WTC11 (cell line): ENCODE measurements at regions of chr1 and their contacts with region 1.

Region 1: GRCh38 chr1:8727809-8728213 is 89.6 kb downstream of the RERE start:
- DNase-seq: no peak
- ATAC-seq: no peak
- H3K4me3 Mint-ChIP-seq: no peak overlapping the region
- H3K27ac Mint-ChIP-seq: peak overlapping the region; percentile 63; the same call in 1 of the 2 replicates
- H3K4me1 Mint-ChIP-seq: peaks cover 39% of the 10 kb centered on the region
- H3K27me3 Mint-ChIP-seq: no peaks in the 10 kb centered on the region
- CTCF ChIP-seq: no peak

Region 2: DNA sequence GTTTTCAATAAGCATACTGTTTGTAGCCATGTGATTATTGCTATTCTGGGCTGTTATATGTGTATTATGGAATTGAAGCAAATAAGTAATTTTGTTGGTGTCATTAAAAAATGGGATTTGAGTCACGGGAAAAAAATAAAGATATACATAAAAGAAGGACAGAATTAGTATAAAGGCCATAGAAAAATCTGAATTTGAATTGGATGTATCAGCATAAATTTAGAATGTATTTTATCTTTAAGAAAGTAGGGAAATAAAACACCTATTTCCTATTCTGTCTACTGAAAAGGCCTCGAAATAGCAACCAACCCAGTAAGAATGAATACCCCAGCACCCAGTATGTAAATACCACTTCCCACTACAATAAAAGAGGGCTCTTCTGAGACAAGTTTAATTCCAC is 224.0 kb before region 1 on chr1:
- CTCF ChIA-PET with region 1: no interaction called
- POLR2A ChIA-PET with region 1: no interaction called
- DNase-seq: no peak
- ATAC-seq: no peak
- H3K4me3 Mint-ChIP-seq: no peak overlapping the region
- H3K27ac Mint-ChIP-seq: 0 out of 2 replicates have a peak overlapping the region, but pooled peaks have one; percentile 55
- H3K4me1 Mint-ChIP-seq: peaks cover 21% of the 10 kb centered on the region
- H3K27me3 Mint-ChIP-seq: peaks cover 3% of the 10 kb centered on the region; the same call in 1 of the 2 replicates
- CTCF ChIP-seq: no peak

Region 3: DNA sequence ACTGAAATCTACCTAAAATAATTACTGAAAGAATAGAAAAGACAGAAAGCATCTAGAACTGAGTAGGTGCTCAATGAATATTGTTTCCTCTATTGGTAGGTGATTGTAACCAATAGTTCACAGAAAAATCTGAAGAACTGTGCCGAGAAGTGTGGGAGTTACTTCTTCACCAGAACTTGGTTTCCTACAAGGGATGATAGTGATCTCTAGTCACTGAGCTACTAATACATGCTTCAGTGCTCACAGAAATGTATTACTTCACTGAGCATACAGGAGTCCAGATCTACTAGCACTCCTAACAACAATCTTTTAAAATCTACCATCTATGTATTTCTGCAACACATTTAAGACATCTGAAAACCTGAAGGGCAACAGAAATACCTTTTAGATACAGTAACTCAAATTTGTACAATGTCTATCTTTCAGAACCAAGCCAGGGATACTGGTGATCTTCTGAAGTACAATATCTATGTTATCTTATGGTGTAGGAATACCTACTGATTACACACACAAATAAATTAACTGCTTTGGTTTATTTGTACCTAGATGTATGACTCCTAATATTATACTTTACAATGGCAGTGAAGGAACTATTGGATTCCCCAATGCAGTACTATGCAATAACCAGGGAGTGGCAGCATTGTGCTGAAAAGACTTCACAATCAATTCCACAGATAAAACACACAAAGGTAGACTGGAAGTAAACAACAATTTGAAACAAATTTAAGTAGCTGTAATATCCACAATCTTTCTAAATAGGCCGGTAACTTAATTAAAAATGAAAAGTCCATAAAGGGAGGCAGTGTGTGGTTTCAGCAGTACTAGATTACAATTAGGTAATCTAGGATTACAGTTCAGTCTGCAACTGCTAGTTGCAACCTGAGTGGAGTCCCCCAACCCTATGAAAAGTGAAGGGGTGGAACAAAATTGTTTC is 166.9 kb before region 1 on chr1:
- CTCF ChIA-PET with region 1: interaction called, 33 read pairs
- POLR2A ChIA-PET with region 1: no interaction called
- DNase-seq: no peak
- ATAC-seq: peak; percentile 69
- H3K4me3 Mint-ChIP-seq: no peak overlapping the region
- H3K27ac Mint-ChIP-seq: peak overlapping the region; percentile 47
- H3K4me1 Mint-ChIP-seq: peaks cover 37% of the 10 kb centered on the region
- H3K27me3 Mint-ChIP-seq: no peaks in the 10 kb centered on the region
- CTCF ChIP-seq: peak; percentile 36

Region 4: DNA sequence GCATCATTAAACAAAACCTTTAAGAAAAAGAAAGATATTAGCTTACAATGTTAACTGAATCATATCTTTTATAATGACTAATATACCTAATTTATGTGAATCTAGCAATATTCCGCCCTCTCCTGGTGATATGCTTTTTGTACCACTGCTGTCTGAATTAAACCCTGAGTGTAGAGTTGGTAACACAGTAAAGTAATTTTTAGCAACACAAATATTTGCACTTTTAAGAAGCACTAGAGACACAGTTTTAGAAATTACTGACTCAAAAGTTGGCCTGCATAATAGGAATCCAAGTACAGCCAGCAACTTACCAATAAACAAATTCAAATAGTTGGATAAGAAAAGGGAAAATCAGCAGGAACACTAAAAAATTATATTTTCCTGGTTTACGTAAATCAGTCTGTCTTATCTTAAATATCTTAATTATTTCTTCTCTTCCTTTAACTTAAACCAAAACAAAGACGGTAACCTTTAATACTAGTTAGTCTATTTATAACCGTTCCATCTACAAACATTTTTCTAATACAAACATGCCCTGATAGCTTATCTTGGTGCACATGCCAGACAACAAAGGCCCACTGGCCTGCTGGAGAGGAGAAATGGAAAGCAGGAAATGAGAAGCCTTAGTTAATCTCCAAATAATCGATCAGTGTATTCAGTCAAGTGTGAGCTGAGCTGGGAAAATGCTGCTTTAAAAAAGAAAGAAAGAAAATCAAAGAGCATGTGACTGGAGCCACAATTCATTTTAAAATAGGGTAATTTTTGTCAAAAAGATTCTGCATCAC is 156.4 kb before region 1 on chr1:
- CTCF ChIA-PET with region 1: interaction called, 19 read pairs
- POLR2A ChIA-PET with region 1: no interaction called
- DNase-seq: no peak
- ATAC-seq: 0 out of 2 replicates have a peak, but pooled peaks have one; percentile 39
- H3K4me3 Mint-ChIP-seq: no peak overlapping the region
- H3K27ac Mint-ChIP-seq: peak overlapping the region; percentile 72
- H3K4me1 Mint-ChIP-seq: peaks cover 27% of the 10 kb centered on the region
- H3K27me3 Mint-ChIP-seq: no peaks in the 10 kb centered on the region
- CTCF ChIP-seq: no peak

Region 5: GRCh38 chr1:8702850-8703810 is 24.7 kb before region 1 on chr1:
- CTCF ChIA-PET with region 1: interaction called, 14 read pairs
- POLR2A ChIA-PET with region 1: interaction called, 3 read pairs
- DNase-seq: peak; percentile 87
- ATAC-seq: peak; percentile 86
- H3K4me3 Mint-ChIP-seq: peak overlapping the region; percentile 92
- H3K27ac Mint-ChIP-seq: peak overlapping the region; percentile 95
- H3K4me1 Mint-ChIP-seq: peaks cover 65% of the 10 kb centered on the region
- H3K27me3 Mint-ChIP-seq: no peaks in the 10 kb centered on the region
- CTCF ChIP-seq: no peak

Region 6: GRCh38 chr1:8740034-8740449 is 12.2 kb after region 1 on chr1:
- CTCF ChIA-PET with region 1: interaction called, 14 read pairs
- POLR2A ChIA-PET with region 1: no interaction called
- DNase-seq: no peak
- ATAC-seq: no peak
- H3K4me3 Mint-ChIP-seq: no peak overlapping the region
- H3K27ac Mint-ChIP-seq: no peak overlapping the region
- H3K4me1 Mint-ChIP-seq: no peaks in the 10 kb centered on the region
- H3K27me3 Mint-ChIP-seq: no peaks in the 10 kb centered on the region
- CTCF ChIP-seq: no peak

Region 7: GRCh38 chr1:8751984-8752383 is 24.2 kb after region 1 on chr1:
- CTCF ChIA-PET with region 1: no interaction called
- POLR2A ChIA-PET with region 1: no interaction called
- DNase-seq: no peak
- ATAC-seq: no peak
- H3K4me3 Mint-ChIP-seq: no peak overlapping the region
- H3K27ac Mint-ChIP-seq: peak overlapping the region; percentile 28; the same call in 1 of the 2 replicates
- H3K4me1 Mint-ChIP-seq: peaks cover 34% of the 10 kb centered on the region
- H3K27me3 Mint-ChIP-seq: no peaks in the 10 kb centered on the region
- CTCF ChIP-seq: no peak